ENCODE measurements at regions of chr3 and their contacts with region 1.

Region 1: GRCh38 chr3:41881233-41881821 is 80.6 kb downstream of the ULK4 start:
- DNase-seq: peak; percentile 21
- CTCF ChIP-seq: peak; percentile 68

Region 2: GRCh38 chr3:40309418-40309924 is 1571.9 kb before region 1 on chr3 and contains the start of gene EIF1B:
- in situ Hi-C with region 1: loop called (anchors 25 kb)
- DNase-seq: peak; percentile 94
- CTCF ChIP-seq: peak; percentile 88

Region 3: DNA sequence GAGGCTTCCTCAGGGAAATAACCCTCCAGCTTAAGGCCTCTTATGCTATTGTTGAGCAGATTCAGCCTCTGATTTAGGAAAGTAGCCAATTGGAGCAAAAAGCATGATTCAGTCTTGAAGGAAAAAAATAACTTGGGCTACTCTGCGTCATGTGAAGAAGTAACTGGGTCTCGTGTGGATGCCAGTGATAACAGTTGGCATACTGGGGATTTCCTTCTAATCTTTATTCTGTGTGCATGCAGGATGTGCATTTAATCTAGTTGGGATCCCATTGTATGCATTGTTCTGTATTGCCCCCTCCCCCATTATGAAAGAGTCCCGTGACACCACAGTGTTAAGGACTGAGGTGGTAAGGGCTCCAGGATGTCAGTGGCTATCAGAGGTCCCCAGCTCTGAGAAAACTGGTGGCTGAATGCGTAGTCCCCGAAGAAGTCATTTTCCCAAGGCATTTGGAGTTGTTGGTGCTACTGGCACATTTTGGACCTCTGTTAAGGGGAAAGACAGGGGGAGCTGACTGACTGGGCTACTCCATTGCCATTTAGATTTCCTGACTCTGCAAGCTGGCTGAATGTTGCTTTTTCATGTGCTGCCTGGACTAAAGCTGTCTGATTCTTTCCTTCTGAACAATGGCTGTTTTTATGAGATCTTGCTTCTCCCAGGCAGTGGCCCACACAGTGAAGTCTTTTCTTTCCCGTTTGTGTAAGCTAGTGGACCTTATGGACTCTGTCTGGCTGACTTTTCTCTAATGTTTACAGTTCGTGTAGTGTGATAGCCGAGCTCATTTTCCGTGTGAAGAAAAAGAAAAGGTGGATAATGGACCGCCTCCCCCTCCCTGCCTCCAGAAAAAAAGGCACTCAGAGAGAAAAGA is 171.4 kb after region 1 on chr3:
- in situ Hi-C with region 1: no loop called
- DNase-seq: no peak
- CTCF ChIP-seq: no peak

Region 4: GRCh38 chr3:42090973-42091731 is 209.8 kb after region 1 on chr3 and contains the start of gene TRAK1:
- in situ Hi-C with region 1: no loop called
- DNase-seq: no peak
- CTCF ChIP-seq: no peak